Lower leg skin (tissue), 4 donors: ENCODE measurements at regions of chr12 and their contacts with region 1.

Region 1: DNA sequence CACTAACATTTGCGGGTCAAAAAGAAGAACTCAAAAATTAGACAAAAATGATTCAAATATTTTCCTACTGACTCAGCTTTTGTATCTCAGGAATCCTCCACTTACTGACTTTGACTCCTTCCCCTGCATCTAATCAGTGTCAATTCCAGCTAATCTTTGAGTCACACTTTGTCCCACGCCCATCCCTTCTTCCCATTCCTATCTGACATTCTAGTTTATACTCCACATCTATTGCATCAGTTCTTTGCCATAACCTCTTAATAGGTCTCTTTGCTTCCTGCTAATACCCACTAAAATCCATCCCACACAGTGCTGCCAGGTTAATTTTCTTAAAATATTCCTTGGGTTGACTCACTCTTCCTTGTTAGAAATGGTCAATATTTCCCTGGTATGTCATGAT is 19.1 kb downstream of the BBS10 start:
- DNase-seq: no peak
- H3K4me3 ChIP-seq: no peak overlapping the region
- CTCF ChIP-seq: no peak
- POLR2A ChIP-seq: no peak

Region 2: GRCh38 chr12:76374386-76375020 is 45.3 kb after region 1 on chr12:
- intact Hi-C with region 1: no loop called
- DNase-seq: no peak
- H3K4me3 ChIP-seq: no peak overlapping the region
- CTCF ChIP-seq: no peak
- POLR2A ChIP-seq: no peak

Region 3: GRCh38 chr12:77724367-77724957 is 1395.3 kb after region 1 on chr12:
- intact Hi-C with region 1: loop called (anchors 5 kb)
- DNase-seq: no peak
- H3K4me3 ChIP-seq: no peak overlapping the region
- CTCF ChIP-seq: no peak
- POLR2A ChIP-seq: no peak